ENCODE measurements at regions of chr9 and their contacts with region 1.

Region 1: GRCh38 chr9:93095205-93096130 is 549 bp upstream of the CARD19 start:
- DNase-seq: peak; percentile 100
- H3K4me3 Mint-ChIP-seq: peak overlapping the region; percentile 76
- H3K27ac Mint-ChIP-seq: peak overlapping the region; percentile 96
- H3K4me1 Mint-ChIP-seq: peaks cover 78% of the 10 kb centered on the region
- H3K27me3 Mint-ChIP-seq: no peaks in the 10 kb centered on the region

Region 2: DNA sequence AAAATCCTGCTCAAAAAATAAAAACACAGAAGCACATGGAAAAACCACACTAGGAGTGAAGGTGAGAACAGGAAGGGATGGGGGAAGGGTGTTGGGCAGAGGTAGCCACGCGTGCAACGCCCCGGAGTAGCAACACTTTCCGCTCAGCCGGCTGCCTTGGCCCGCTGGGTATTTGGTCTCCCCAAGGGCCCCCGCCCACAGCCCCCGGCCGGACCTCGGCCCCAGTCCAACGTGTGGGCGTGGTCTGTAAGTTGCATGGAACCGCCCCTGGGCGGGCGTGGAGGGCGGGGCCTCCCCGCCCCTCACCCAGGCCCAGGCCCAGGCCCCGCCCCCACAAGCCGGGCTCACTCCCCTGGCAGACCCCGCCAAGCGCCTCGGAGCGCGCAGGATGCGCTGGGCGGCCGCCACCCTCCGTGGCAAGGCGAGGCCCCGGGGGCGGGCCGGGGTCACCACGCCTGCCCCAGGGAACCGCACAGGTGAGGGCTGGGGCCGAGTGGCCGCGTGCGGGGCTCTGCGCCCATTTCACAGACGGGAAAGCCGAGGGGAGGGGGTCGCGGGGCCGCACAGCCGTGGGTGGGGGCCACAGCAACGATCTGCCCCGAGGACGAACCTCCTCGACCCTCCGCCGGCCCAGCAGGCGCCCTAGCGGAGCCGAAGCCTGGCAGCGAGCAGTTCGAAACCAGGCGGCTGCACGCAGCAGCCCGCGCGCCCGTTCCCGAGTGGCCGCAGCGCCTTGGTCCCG is 36.9 kb before region 1 on chr9 and contains the start of gene SUSD3:
- CTCF ChIA-PET with region 1: interaction called, 7 read pairs
- POLR2A ChIA-PET with region 1: interaction called, 63 read pairs
- DNase-seq: peak; percentile 77
- H3K4me3 Mint-ChIP-seq: peak within 1 kb of the TSS; percentile 92
- H3K27ac Mint-ChIP-seq: peak within 1 kb of the TSS; percentile 83
- H3K4me1 Mint-ChIP-seq: peaks cover 63% of the 10 kb centered on the region
- H3K27me3 Mint-ChIP-seq: no peaks in the 10 kb centered on the region
- total RNA-seq, gene SUSD3: 69.6 to 71.4 TPM

Region 3: DNA sequence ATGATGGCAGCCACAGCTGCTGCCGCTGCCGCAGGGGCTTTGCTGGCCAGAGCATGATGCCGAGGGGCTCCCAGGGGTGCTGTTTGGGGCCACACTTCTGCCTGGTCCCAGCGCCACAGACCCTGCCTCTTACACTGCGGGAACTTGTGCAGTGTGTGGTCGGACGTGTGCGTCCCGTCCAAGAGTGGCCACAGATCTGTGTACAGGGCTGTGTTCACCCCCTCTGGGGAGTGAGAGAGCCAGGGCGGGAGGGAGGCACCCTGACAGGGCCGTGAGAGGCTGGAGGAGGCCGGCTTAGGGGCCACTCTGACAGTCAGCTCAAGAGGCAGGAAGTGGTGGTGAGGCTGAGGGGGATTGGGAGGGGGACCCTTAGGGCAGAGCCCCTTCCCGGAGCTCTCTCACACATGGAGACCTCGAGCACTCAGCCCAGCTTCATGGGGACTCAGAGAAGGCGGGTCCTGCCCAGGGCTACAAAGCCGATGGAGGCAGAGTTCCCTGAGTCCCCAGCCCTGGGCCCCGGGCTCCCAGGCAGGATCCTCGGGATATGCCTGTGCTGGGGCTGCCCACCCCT is 12.5 kb before region 1 on chr9:
- CTCF ChIA-PET with region 1: no interaction called
- POLR2A ChIA-PET with region 1: interaction called, 32 read pairs
- DNase-seq: no peak
- H3K4me3 Mint-ChIP-seq: no peak overlapping the region
- H3K27ac Mint-ChIP-seq: peak overlapping the region; percentile 72
- H3K4me1 Mint-ChIP-seq: peaks cover 44% of the 10 kb centered on the region
- H3K27me3 Mint-ChIP-seq: no peaks in the 10 kb centered on the region